Dendritic cell treated with granulocyte-macrophage colony-stimulating factor and Interleukin-4, amounts not matched to agents 40 ng/mL and 50 ng/mL, for 4 days (primary cell): ENCODE measurements at regions of chr14 and their contacts with region 1.

Region 1: GRCh38 chr14:67599698-67600561 is at the start of gene PIGH:
- H3K4me3 Mint-ChIP-seq: peak within 1 kb of the TSS; percentile 91
- H3K27ac Mint-ChIP-seq: peak within 1 kb of the TSS; percentile 94
- H3K4me1 Mint-ChIP-seq: peaks cover 21% of the 10 kb centered on the region
- H3K27me3 Mint-ChIP-seq: peaks cover 4% of the 10 kb centered on the region

Region 2: DNA sequence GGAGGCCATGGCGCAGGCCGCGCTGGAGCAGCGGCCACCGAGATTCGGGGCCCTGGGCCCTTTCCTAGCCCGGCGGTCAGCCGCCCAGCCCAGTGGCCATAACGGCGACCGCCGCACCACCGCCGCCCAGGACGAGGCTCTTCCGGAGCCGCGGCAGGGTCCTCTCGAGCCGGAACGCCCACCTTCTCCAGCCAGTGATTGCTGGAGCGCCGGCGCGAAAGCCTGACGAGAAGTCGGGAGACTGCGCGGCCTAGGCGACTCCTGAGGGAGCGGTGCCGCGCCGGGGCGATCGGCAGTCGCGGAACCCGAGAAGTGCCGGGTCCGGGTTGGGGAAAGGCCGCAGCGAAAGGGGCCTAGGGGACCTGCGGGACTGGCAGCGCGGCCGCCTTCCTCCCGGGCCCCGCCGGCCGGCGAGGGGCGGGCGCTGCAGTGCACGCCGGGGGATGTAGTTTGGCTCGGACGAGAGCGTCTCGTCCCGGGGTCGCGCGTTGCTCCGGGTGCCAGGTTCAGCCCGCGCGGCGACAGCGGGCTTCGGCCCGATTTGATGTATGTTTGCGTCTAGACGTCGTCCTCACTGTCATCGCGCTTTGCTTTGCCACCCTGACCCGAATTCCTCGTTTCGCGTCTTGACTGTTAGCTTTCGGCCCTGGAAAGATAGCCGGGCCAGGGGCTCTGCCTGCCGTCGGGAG is 74.7 kb after region 1 on chr14 and contains the start of gene VTI1B:
- intact Hi-C with region 1: loop called (anchors 1 kb)
- H3K4me3 Mint-ChIP-seq: peak within 1 kb of the TSS; percentile 92
- H3K27ac Mint-ChIP-seq: peak within 1 kb of the TSS; percentile 96
- H3K4me1 Mint-ChIP-seq: peaks cover 54% of the 10 kb centered on the region
- H3K27me3 Mint-ChIP-seq: no peaks in the 10 kb centered on the region